ENCODE measurements at regions of chr4 and their contacts with region 1.

Region 1: DNA sequence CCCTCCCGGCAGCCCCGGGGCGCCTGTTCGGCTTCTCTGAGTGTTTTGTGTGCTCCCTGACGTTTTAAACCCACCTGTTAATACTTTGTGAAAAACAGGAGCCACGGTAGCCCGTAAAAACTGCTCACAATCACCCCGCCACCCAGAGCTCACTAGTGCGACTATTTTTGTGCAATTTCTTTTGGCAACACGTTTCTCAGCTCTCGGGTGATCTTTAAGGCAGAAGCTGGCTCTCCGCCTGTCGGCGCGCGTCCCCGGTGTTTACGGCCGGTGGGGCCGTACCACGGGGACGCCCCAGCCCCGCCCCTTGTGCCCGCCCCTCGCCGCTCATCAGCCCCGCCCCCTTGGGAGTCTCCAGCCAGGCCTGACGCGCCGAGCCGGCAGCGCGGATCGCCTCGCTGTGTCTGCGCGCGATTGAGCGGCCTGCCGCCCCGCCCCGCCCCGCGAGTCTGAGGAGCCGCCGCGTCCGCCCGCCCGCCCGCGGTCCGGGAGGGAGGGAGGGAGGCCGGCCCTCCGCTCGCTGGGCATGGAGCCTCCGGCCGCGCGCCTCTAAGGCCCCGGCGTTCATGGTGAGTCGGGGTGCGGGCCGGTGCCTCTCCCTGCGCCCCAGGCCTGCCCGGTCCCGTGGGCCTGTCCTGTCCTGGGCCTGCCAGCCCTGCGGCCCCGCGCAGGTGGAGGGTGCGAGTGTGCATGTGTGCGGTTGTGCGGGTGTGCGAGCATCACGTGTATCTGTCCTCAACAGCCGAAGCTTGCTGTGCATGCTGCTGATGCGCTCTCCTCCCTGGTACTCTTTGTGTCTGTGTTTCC is 56.2 kb upstream of the TADA2B start:
- DNase-seq: peak; percentile 96 to 98
- H3K4me3 ChIP-seq: peak overlapping the region; percentile 65 to 83 (median 76)
- H3K27ac ChIP-seq: peak overlapping the region; percentile 89 to 96 (median 94)
- H3K4me1 ChIP-seq: peaks cover 63 to 88% (median 80%) of the 10 kb centered on the region in 4 donors
- H3K27me3 ChIP-seq: no peaks in the 10 kb centered on the region
- CTCF ChIP-seq: peak in 2 of 7 experiments; percentile 9
- EP300 ChIP-seq: no peak
- POLR2A ChIP-seq: peak in 1 of 4 donors; percentile 52

Region 2: GRCh38 chr4:7042697-7043464 is 55.9 kb after region 1 on chr4 and contains the start of gene TADA2B:
- intact Hi-C with region 1: loop called (anchors 10 kb)
- DNase-seq: peak; percentile 98 to 99
- H3K4me3 ChIP-seq: peak within 1 kb of the TSS; percentile 88 to 99 (median 98)
- H3K27ac ChIP-seq: peak within 1 kb of the TSS; percentile 79 to 93 (median 93)
- H3K4me1 ChIP-seq: peaks cover 31 to 59% (median 56%) of the 10 kb centered on the region in 4 donors
- H3K27me3 ChIP-seq: no peaks in the 10 kb centered on the region
- CTCF ChIP-seq: peak in 3 of 7 experiments; percentile 19 to 68 (median 25)
- EP300 ChIP-seq: no peak
- POLR2A ChIP-seq: no peak
- total RNA-seq, gene TADA2B: 1.2 to 73.7 (median 19.3) TPM

Region 3: DNA sequence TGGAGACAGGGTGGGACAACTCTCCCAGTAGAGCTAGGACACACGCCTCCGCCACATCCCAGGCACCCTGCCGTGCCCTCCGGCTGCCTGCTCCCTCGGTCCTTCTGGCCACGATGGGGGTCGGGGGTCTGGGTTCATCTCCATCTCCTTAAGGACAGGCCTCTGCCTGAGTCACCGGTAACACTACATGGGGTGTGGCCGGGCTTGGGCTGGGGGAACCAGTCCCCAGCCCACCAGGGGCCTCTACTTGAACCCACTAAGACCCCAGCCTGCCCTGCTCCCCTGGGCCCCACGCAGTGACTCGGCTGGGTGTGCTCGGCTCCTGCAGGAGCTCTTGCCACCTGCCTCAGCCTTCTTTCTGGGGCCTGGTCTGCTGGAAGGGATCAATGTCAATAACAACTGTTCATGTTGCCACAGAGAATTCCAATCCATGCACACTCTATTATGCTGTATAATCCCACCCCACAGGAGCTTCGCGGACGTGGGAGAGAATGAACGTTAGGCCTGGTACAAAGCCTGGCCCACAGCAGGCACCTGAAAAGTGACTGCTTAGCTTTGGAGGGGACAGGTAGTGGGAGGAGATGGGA is 625.4 kb after region 1 on chr4:
- intact Hi-C with region 1: no loop called
- DNase-seq: no peak
- H3K4me3 ChIP-seq: no peak overlapping the region
- H3K27ac ChIP-seq: no peak overlapping the region
- H3K4me1 ChIP-seq: peaks cover 0 to 3% (median 0%) of the 10 kb centered on the region in 4 donors
- H3K27me3 ChIP-seq: peaks cover 0 to 9% (median 0%) of the 10 kb centered on the region in 3 donors
- CTCF ChIP-seq: no peak
- EP300 ChIP-seq: no peak
- POLR2A ChIP-seq: no peak

Measured in stomach (tissue), 19 donors.